ENCODE measurements at regions of chr15 and their contacts with region 1.

Region 1: GRCh38 chr15:80455668-80456442 is 51.7 kb downstream of the ARNT2 start:
- DNase-seq: peak; percentile 72
- CTCF ChIP-seq: peak; percentile 91

Region 2: DNA sequence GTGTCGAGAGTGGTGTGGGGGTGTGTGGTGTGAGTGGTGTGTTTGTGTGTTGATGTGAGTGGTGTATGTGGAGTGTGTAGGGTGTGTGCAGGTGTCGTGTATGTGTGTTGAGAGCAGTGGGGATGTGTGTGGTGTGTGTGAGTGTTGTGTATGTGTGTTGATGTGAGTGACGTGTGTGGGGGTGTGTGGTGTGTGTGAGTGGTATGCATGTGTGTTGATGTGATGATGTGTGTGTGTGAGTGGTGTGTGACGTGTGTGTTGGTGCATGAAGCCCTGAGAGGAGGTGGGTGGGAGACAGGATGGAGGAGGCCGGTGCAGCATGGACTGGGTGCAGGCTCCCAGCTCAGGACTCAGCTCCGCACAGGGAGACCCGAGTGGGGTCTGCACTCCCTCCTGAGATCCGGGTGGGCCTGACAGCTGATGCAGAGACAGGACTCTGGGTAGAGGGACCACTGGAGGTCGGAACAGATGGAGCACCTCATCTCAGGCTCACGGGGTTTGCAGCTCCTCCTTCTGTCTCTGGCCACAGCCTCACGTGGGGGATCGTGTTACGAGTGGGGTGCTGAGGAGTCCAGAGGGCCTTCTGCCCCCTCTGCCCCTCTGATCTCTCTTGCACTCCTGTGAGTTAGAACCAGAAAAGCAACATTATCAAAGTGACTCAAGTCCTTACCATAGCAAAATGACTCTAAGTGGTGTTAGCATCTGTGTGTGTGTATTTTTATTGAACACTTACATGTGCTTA is 10.4 kb before region 1 on chr15:
- CTCF ChIA-PET with region 1: interaction called, 10 read pairs
- POLR2A ChIA-PET with region 1: no interaction called
- DNase-seq: no peak
- CTCF ChIP-seq: no peak

Region 3: GRCh38 chr15:80783260-80783659 is 327.4 kb after region 1 on chr15:
- CTCF ChIA-PET with region 1: interaction called, 100 read pairs
- POLR2A ChIA-PET with region 1: no interaction called
- DNase-seq: no peak
- CTCF ChIP-seq: no peak

Measured in GM10248 (cell line).